Posterior vena cava (tissue), 2 donors: ENCODE measurements at regions of chr5 and their contacts with region 1.

Region 1: GRCh38 chr5:138213161-138214029 is at the start of gene CDC23:
- DNase-seq: peak; percentile 97
- total RNA-seq, gene CDC23: 14.0 to 18.0 TPM

Region 2: GRCh38 chr5:138418444-138418843 is 205.0 kb after region 1 on chr5:
- intact Hi-C with region 1: loop called in 1 of 2 experiments (anchors 10 kb)
- DNase-seq: no peak